HAP-1 (cell line): ENCODE measurements at regions of chr14 and their contacts with region 1.

Region 1: DNA sequence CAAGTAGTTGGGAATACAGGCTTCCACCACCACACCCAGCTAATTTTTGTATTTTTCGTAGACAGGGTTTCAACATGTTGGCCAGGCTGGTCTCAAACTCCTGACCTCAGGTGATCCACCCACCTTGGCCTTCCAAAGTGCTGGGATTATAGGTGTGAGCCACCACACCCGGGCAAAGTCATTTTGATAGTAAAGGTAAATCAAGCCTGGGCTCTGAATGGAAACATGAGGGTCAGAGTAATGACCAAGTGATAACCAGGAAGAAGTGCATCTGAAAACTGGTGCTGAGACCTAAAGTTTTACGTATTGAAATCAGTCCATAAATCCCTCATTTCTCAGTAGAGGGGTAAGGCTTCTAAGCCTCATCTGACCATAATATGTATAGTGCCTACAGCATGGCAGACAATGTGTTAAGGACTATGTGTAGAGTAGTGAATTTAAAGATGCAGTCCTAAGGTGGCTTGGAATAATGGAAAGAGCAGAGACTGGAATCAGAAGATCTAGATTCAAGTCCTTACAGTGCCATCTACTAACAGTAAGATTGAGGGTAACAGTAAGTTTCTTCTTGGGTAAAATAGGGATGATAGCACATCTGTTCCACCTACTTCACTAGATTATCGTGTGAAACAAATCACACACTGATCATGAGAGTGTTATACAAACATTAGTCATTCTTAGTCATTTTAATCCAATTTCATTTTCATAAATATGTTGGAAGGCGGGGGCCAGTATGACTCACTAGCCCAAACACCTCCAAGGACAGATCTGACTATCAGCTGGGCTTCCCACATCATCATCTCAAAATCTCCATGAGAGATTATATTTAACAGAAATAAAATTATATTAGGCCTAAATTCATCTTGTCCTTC is 11.2 kb downstream of the MAP4K5 start:
- DNase-seq: no peak
- H3K4me3 ChIP-seq: no peak overlapping the region
- H3K4me1 ChIP-seq: peaks cover 5% of the 10 kb centered on the region; the same call in 1 of the 2 replicates
- H3K27me3 ChIP-seq: no peaks in the 10 kb centered on the region

Region 2: GRCh38 chr14:50321009-50321660 is 200.0 kb before region 1 on chr14:
- in situ Hi-C with region 1: loop called (anchors 10 kb)
- DNase-seq: peak; percentile 69 to 81
- H3K4me3 ChIP-seq: peak overlapping the region; percentile 10; the same call in 1 of the 2 replicates
- H3K4me1 ChIP-seq: 0 out of 2 replicates have a peak, but pooled peaks cover 5% of the 10 kb centered on the region
- H3K27me3 ChIP-seq: no peaks in the 10 kb centered on the region